PC-3 (cell line): ENCODE measurements at regions of chr13 and their contacts with region 1.

Region 1: GRCh38 chr13:43757266-43757665 is 29.5 kb downstream of the ENOX1 start:
- DNase-seq: no peak
- ATAC-seq: no peak
- H3K4me3 ChIP-seq: no peak overlapping the region
- H3K27ac ChIP-seq: no peak overlapping the region
- H3K4me1 ChIP-seq: no peaks in the 10 kb centered on the region
- H3K27me3 ChIP-seq: no peaks in the 10 kb centered on the region
- CTCF ChIP-seq: no peak

Region 2: GRCh38 chr13:44274452-44275205 is 517.4 kb after region 1 on chr13:
- CTCF ChIA-PET with region 1: interaction called, 16 read pairs
- POLR2A ChIA-PET with region 1: no interaction called
- intact Hi-C with region 1: no loop called
- DNase-seq: peak; percentile 47
- ATAC-seq: peak; percentile 50; the same call in 1 of the 2 replicates
- H3K4me3 ChIP-seq: peak overlapping the region; percentile 22; the same call in 1 of the 2 replicates
- H3K27ac ChIP-seq: peak overlapping the region; percentile 67
- H3K4me1 ChIP-seq: peaks cover 42% of the 10 kb centered on the region
- H3K27me3 ChIP-seq: no peaks in the 10 kb centered on the region
- CTCF ChIP-seq: no peak